ENCODE measurements at regions of chr1 and their contacts with region 1.

Region 1: GRCh38 chr1:113811888-113812660 is at the start of gene RSBN1:
- DNase-seq: peak; percentile 96
- ATAC-seq: peak; percentile 97
- H3K4me3 Mint-ChIP-seq: peak within 1 kb of the TSS; percentile 99
- H3K27ac Mint-ChIP-seq: peak within 1 kb of the TSS; percentile 98
- H3K4me1 Mint-ChIP-seq: peaks cover 19% of the 10 kb centered on the region
- H3K27me3 Mint-ChIP-seq: no peaks in the 10 kb centered on the region
- total RNA-seq, gene RSBN1: 32.7 to 37.0 TPM

Region 2: GRCh38 chr1:113519556-113519955 is 292.5 kb before region 1 on chr1:
- POLR2A ChIA-PET with region 1: no interaction called
- DNase-seq: no peak
- ATAC-seq: no peak
- H3K4me3 Mint-ChIP-seq: no peak overlapping the region
- H3K27ac Mint-ChIP-seq: no peak overlapping the region
- H3K4me1 Mint-ChIP-seq: peaks cover 3% of the 10 kb centered on the region
- H3K27me3 Mint-ChIP-seq: peaks cover 2% of the 10 kb centered on the region

Region 3: DNA sequence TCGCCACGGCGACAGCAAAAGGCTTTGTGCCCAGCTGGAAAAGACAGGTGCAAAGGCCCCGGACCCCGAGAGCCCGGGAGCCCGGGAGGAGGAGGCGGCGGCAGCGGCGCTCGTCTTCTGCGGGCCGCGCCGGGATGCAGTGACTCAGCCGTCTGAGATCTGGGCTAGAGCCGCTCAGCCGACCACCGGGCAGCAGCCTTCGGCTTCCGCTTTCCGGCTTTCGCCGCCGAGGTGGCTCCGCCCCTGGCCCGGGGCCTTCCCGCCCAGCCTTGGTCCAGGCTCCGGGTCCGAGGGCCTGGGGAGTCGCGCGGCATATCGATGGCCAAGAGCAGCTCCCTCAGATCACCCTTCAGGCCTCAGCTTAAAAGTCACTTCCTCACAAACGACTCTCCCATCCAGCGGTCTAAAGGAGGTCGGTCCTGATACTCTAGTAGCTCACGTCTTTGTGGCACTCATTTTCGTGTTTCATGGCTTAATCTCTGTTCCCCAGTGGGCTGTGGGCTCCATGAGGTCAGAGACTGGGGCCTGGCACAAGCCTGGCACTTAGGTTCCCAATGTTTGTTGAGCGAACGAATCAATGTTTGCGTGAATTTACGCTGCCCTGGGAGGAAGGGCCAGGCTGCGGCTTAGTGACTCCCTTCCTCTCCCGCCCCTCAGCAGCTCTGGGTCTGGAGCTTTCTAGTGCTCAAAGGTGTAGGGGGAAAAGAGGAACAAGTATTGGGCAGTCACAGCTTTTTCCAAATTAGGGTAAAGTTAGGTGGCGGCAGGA is 52.6 kb before region 1 on chr1 and contains the start of gene PHTF1:
- POLR2A ChIA-PET with region 1: interaction called, 17 read pairs
- DNase-seq: peak; percentile 74
- ATAC-seq: peak; percentile 80
- H3K4me3 Mint-ChIP-seq: peak within 1 kb of the TSS; percentile 96
- H3K27ac Mint-ChIP-seq: peak within 1 kb of the TSS; percentile 96
- H3K4me1 Mint-ChIP-seq: peaks cover 29% of the 10 kb centered on the region
- H3K27me3 Mint-ChIP-seq: no peaks in the 10 kb centered on the region
- total RNA-seq, gene PHTF1: 19.2 to 22.6 TPM

Region 4: DNA sequence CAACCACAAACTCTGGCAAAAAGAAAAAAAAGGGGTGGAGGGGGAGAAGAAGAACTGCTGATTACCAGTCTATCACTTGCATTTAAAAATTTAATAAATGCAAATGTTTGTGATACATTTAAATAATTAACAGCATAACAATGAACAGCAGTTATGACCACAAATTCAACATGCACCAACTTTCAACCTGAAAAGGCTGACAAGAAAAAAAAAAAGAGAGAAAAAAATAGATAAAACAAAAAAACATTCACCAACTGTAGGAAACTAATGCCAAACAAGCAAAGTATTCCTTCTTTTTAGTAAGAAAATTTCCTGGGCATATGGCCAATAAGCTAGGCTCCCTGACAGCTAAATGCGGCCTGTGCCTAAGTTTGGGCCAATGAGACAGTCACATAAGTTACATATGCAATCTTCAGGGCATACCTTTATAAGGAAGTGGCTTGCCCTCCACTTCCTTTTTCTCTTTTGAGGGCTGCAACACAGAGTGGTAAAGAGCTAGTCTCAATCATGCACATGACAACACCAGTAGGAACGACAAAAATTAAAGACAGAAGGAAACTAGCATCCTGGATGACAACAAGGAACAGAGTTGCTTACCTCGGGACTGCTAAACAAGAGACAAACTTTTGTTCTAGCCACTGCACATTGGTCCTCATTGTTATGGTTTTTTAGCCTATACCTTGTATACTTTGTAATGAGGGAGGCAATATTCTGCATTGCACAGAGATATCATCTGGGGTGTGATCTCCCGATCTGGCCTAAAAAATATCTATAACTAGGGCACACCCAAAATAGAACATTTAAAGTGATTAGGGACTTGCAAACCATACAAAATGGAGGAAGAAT is 28.6 kb before region 1 on chr1:
- POLR2A ChIA-PET with region 1: interaction called, 23 read pairs
- DNase-seq: peak; percentile 38
- ATAC-seq: peak; percentile 97
- H3K4me3 Mint-ChIP-seq: peak overlapping the region; percentile 81
- H3K27ac Mint-ChIP-seq: peak overlapping the region; percentile 98
- H3K4me1 Mint-ChIP-seq: peaks cover 43% of the 10 kb centered on the region
- H3K27me3 Mint-ChIP-seq: no peaks in the 10 kb centered on the region

Region 5: GRCh38 chr1:113792986-113793385 is 19.1 kb before region 1 on chr1:
- POLR2A ChIA-PET with region 1: interaction called, 12 read pairs
- DNase-seq: no peak
- ATAC-seq: no peak
- H3K4me3 Mint-ChIP-seq: no peak overlapping the region
- H3K27ac Mint-ChIP-seq: peak overlapping the region; percentile 62
- H3K4me1 Mint-ChIP-seq: peaks cover 38% of the 10 kb centered on the region
- H3K27me3 Mint-ChIP-seq: no peaks in the 10 kb centered on the region

Region 6: GRCh38 chr1:113904674-113905434 is 92.8 kb after region 1 on chr1 and contains the starts of genes AP4B1 and DCLRE1B:
- POLR2A ChIA-PET with region 1: interaction called, 14 read pairs
- DNase-seq: peak; percentile 97
- ATAC-seq: peak; percentile 89
- H3K4me3 Mint-ChIP-seq: peak within 1 kb of the TSS; percentile 99
- H3K27ac Mint-ChIP-seq: peak within 1 kb of the TSS; percentile 91
- H3K4me1 Mint-ChIP-seq: peaks cover 48% of the 10 kb centered on the region
- H3K27me3 Mint-ChIP-seq: no peaks in the 10 kb centered on the region
- total RNA-seq, gene AP4B1: 53.9 to 60.5 TPM
- total RNA-seq, gene DCLRE1B: 13.4 to 14.3 TPM

Region 7: DNA sequence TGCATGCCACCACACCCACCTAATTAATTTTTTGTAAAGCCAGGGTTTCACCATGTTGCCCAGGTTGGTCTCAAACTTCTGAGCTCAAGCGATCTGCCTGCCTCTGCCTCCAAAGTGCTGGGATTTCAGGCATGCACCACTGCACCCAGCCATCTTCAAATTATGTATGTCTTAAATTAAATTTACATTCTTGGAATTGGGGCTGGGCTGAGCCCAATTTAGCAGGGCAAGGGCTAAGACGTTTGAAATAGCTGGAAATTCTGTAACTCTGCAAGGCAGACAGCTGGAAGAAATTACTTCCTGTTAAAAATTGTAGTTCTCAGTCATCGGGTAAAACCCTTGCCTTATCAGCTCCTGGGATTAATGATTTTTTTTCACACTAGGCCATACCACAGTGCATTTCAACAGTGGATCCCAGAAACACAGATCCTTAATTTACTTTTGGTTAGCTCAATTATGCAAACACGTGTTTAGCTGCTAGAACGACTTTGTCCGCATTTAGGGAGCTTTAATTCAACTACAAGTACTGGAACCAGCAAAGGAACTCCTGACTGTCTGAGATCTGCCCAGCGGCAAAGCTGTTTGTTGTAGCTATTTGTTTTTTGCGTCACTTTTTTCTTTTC is 250.5 kb after region 1 on chr1:
- POLR2A ChIA-PET with region 1: no interaction called
- DNase-seq: no peak
- ATAC-seq: no peak
- H3K4me3 Mint-ChIP-seq: no peak overlapping the region
- H3K27ac Mint-ChIP-seq: no peak overlapping the region
- H3K4me1 Mint-ChIP-seq: no peaks in the 10 kb centered on the region
- H3K27me3 Mint-ChIP-seq: peaks cover 7% of the 10 kb centered on the region

Measured in activated naive CD8-positive, alpha-beta T cell treated with anti-CD3 and anti-CD28 coated beads, Interleukin-2, amount 10 ng/mL, durations not matched to agents 7 days and 5 days (primary cell).